ENCODE measurements at regions of chr13 and their contacts with region 1.

Region 1: DNA sequence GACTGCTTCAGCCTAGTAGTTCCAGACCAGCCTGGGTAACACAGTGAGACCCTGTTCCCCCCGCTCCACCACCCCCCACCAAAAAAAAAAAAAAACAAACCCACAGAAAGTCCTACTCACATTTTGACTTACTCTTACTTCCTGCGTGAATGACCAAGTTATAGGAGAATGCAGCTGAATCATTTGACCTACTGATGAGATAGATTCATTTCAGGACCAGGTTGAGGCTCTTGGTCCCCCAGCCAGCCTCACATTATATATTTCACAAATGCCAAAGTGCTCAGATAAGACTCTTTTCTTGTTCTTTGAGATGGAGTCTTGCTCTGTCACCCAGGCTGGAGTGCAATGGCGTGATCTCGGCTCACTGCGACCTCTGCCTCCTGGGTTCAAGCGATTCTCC is 70.2 kb downstream of the KLF5 start:
- DNase-seq: no peak
- H3K4me3 ChIP-seq: no peak overlapping the region
- H3K27ac ChIP-seq: no peak overlapping the region
- H3K27me3 ChIP-seq: peaks cover 0 to 6% (median 0%) of the 10 kb centered on the region in 45 donors
- CTCF ChIP-seq: no peak

Region 2: GRCh38 chr13:72004784-72005374 is 1124.1 kb before region 1 on chr13:
- intact Hi-C with region 1: no loop called
- DNase-seq: no peak
- H3K4me3 ChIP-seq: no peak overlapping the region
- H3K27ac ChIP-seq: no peak overlapping the region
- H3K27me3 ChIP-seq: no peaks in the 10 kb centered on the region
- CTCF ChIP-seq: no peak

Region 3: GRCh38 chr13:73141292-73141771 is 12.3 kb after region 1 on chr13:
- intact Hi-C with region 1: loop called in 1 of 2 experiments (anchors 2 kb)
- DNase-seq: no peak
- H3K4me3 ChIP-seq: peak overlapping the region in 46 of 59 donors; percentile 1 to 50 (median 27)
- H3K27ac ChIP-seq: no peak overlapping the region
- H3K27me3 ChIP-seq: no peaks in the 10 kb centered on the region
- CTCF ChIP-seq: no peak